ENCODE measurements at regions of chr2 and their contacts with region 1.

Region 1: DNA sequence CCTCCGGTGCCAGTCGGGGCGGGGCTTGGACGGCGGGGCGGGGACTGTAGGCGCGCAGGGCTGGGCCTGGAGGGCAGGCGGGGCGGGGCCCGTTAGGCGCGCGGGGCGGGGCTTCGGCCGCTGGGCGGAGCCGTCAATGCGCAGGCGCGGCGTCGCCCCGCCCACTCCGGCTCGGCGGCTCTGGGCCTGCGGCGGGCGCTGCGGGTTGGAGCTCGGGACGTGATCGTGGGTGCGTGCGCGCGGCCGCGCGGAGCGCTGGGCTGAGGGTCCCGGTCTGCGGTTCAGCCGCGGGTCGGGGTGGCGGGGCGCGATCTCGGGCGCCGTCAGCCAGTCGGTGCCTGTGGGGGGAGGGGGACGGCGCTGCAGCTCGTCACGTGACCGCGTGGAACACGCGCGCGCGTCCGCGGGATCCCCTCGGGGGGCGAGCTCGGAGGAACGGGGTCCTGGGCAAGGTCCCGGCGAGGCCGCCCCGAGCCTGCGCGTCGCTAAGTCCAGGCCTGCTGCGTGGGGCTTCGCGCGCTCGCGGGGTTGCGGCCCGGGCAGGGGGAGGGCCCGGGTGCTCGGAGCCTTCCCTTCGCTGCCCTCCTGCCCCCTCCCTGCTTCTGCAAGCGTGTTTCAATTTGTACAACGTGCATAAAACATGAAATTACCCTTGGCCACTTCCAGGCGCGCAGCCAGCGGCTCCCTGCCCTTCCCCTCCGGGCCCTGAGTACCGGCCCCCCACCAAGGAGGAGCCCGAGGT is at the start of gene D2HGDH:
- DNase-seq: peak; percentile 87
- H3K4me3 Mint-ChIP-seq: peak within 1 kb of the TSS; percentile 73
- H3K27ac Mint-ChIP-seq: peak within 1 kb of the TSS; percentile 30
- H3K4me1 Mint-ChIP-seq: peaks cover 41% of the 10 kb centered on the region
- H3K27me3 Mint-ChIP-seq: no peaks in the 10 kb centered on the region
- total RNA-seq, gene D2HGDH: 36.5 and 39.9 TPM in 2 replicates

Region 2: DNA sequence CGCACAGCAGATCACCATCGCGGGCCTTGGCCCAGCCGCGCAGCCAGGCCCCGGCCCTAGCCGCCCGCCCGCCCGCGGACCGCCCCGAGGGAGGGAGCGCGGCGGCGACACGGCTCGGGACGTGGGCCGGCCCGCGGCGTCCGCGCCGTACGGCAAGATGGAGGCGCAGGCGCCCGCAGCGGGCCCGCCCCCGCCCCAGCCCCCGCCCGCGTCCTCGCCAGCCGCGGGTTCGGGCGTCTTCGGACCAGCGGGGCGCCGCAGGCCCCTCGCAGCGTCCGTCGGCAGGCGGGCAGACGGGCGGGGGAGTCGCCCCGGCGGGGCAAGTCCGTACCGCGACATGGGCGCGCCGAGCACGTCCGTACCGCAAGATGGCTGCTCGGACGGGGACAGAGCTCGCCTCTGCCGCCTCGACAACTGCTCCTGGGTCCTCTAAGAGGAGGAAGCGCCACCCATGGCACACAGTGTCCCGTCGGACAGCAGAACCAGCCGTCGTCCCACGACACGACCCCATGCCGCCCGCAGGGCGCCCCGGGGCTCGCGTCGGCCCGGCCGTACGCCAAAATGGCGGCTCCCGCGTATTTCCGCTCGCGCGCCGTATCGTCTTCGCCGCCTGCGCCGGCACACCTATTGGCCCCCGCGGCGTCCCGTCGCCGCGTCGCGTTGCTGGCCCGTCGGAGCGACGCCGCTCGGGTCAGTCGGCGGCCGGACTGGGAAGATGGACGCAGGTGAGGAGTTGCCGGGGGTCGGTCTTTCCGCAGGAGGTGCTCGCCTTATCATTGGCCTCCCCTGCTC is 97.4 kb before region 1 on chr2 and contains the starts of genes ATG4B and THAP4:
- intact Hi-C with region 1: loop called (anchors 2 kb)
- DNase-seq: peak; percentile 79
- H3K4me3 Mint-ChIP-seq: peak within 1 kb of the TSS; percentile 94
- H3K27ac Mint-ChIP-seq: peak within 1 kb of the TSS; percentile 92
- H3K4me1 Mint-ChIP-seq: peaks cover 42% of the 10 kb centered on the region
- H3K27me3 Mint-ChIP-seq: no peaks in the 10 kb centered on the region
- total RNA-seq, gene ATG4B: 117 TPM in 2 replicates
- total RNA-seq, gene THAP4: 48.7 and 53.3 TPM in 2 replicates

Region 3: GRCh38 chr2:241686649-241687425 is 47.8 kb before region 1 on chr2 and contains the start of gene DTYMK:
- intact Hi-C with region 1: loop called (anchors 5 kb)
- DNase-seq: peak; percentile 96
- H3K4me3 Mint-ChIP-seq: peak within 1 kb of the TSS; percentile 88
- H3K27ac Mint-ChIP-seq: peak within 1 kb of the TSS; percentile 96
- H3K4me1 Mint-ChIP-seq: peaks cover 15% of the 10 kb centered on the region
- H3K27me3 Mint-ChIP-seq: no peaks in the 10 kb centered on the region
- total RNA-seq, gene DTYMK: 95.9 and 98.2 TPM in 2 replicates

Region 4: GRCh38 chr2:241702132-241703031 is 32.3 kb before region 1 on chr2:
- intact Hi-C with region 1: loop called (anchors 1 kb)
- DNase-seq: peak; percentile 81
- H3K4me3 Mint-ChIP-seq: peak overlapping the region; percentile 81
- H3K27ac Mint-ChIP-seq: peak overlapping the region; percentile 59
- H3K4me1 Mint-ChIP-seq: peaks cover 13% of the 10 kb centered on the region
- H3K27me3 Mint-ChIP-seq: no peaks in the 10 kb centered on the region

Region 5: DNA sequence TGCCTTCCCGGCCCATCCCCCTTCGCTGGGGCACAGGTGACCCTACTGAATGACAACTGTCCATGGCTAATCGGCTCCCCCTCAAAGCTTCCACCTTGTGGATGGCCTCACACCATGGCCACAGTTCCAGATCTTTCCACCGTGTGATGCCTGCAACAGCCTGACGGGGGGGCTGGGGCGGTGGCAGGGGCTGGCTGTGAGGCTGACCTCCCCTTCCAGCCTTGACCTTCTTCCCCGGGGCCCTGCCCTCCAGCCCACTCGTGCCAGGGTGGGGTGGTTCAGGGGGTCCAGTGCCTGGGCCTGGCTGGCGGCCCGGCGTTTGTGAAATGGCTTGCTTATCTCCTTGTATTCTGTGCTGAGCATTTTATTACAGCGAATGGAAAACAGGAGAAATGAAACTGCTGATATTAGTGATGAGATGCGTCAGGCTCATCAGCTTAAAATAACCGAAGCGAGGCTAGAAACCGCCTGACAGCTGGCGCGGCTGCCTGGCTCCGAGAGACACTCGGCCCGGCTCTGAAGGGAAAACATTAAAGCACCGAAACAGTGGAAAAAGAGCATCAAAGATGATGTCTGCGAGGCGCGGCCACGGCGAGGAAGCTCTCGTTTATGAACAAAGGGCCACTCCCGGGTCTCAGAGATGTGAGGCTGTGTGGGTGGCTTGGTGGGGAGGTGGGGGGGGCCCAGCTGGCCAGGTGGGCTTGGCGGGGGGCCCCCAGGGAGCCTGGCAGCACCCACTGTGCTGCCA is 125.0 kb after region 1 on chr2:
- intact Hi-C with region 1: loop called (anchors 5 kb)
- DNase-seq: peak; percentile 48
- H3K4me3 Mint-ChIP-seq: peak overlapping the region; percentile 75
- H3K27ac Mint-ChIP-seq: peak overlapping the region; percentile 97
- H3K4me1 Mint-ChIP-seq: peaks cover 45% of the 10 kb centered on the region
- H3K27me3 Mint-ChIP-seq: peaks cover 4% of the 10 kb centered on the region

Region 6: DNA sequence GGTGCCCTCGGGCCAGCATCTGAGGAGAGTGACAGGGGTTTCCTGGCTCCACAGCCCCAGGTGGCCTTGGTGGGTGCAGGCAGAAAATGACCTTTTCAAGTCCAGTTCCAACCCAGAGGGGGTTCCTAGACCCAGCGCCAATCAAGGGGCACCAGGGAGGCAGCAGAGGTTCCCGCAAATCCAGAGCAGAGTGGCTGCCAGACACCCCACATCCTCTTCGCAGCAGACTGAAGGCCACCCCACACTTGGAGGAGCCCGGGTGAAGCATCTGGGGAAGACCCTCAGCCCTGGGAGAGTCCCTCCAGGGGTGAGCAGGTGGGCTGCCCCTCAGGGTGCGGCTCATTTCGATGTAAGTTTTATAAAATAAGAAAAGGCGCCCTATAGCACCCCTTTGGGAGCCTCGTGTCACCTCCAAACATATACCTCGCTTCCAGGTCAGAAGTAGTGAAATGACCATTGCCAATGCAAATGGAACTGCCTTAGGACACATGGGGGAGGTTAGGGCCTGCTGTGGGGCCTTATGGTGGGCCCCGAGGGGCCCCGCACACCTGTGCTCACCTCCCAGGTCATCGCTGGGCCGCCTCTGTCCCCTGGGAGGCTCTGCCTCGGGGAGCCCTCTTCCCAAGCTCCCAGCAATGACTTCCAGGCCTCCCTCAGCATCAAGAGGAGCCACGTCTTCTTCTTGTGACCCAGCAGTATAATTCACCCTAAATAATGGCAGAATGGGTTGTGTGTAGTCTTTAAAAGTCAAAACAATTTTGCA is 145.9 kb after region 1 on chr2:
- intact Hi-C with region 1: loop called (anchors 1 kb)
- DNase-seq: no peak
- H3K4me3 Mint-ChIP-seq: peak overlapping the region; percentile 89
- H3K27ac Mint-ChIP-seq: peak overlapping the region; percentile 90
- H3K4me1 Mint-ChIP-seq: peaks cover 18% of the 10 kb centered on the region
- H3K27me3 Mint-ChIP-seq: no peaks in the 10 kb centered on the region

Region 7: GRCh38 chr2:241924069-241924908 is 189.7 kb after region 1 on chr2:
- intact Hi-C with region 1: no loop called
- DNase-seq: no peak
- H3K4me3 Mint-ChIP-seq: no peak overlapping the region
- H3K27ac Mint-ChIP-seq: no peak overlapping the region
- H3K4me1 Mint-ChIP-seq: peaks cover 9% of the 10 kb centered on the region
- H3K27me3 Mint-ChIP-seq: no peaks in the 10 kb centered on the region

Measured in activated T-helper 2 cell treated with anti-CD3 and anti-CD28 coated beads, Interferon-gamma antibody, Interleukin-2, Interleukin-4, amounts not matched to agents 10 μg/mL and 5 μg/mL and 100 μg/mL, durations not matched to agents 14 hours and 24 hours and 36 hours (primary cell).